ENCODE measurements at regions of chr3 and their contacts with region 1.

Region 1: GRCh38 chr3:189013224-189013888 is 158.4 kb upstream of the TPRG1 start:
- DNase-seq: no peak
- H3K4me3 ChIP-seq: no peak overlapping the region
- H3K27ac ChIP-seq: no peak overlapping the region
- H3K4me1 ChIP-seq: no peaks in the 10 kb centered on the region
- H3K27me3 ChIP-seq: no peaks in the 10 kb centered on the region
- CTCF ChIP-seq: no peak
- EP300 ChIP-seq: no peak
- POLR2A ChIP-seq: no peak
- RAD21 ChIP-seq: no peak

Region 2: GRCh38 chr3:188842639-188843038 is 170.7 kb before region 1 on chr3:
- CTCF ChIA-PET with region 1: no interaction called
- POLR2A ChIA-PET with region 1: no interaction called
- DNase-seq: no peak
- H3K4me3 ChIP-seq: no peak overlapping the region
- H3K27ac ChIP-seq: no peak overlapping the region
- H3K4me1 ChIP-seq: no peaks in the 10 kb centered on the region
- H3K27me3 ChIP-seq: no peaks in the 10 kb centered on the region
- CTCF ChIP-seq: no peak
- EP300 ChIP-seq: no peak
- POLR2A ChIP-seq: no peak
- RAD21 ChIP-seq: no peak

Region 3: GRCh38 chr3:189041482-189042090 is 28.2 kb after region 1 on chr3:
- CTCF ChIA-PET with region 1: interaction called, 11 read pairs
- POLR2A ChIA-PET with region 1: no interaction called
- DNase-seq: peak; percentile 33 to 69
- H3K4me3 ChIP-seq: no peak overlapping the region
- H3K27ac ChIP-seq: no peak overlapping the region
- H3K4me1 ChIP-seq: no peaks in the 10 kb centered on the region
- H3K27me3 ChIP-seq: no peaks in the 10 kb centered on the region
- CTCF ChIP-seq: peak; percentile 15 to 81 (median 62)
- EP300 ChIP-seq: no peak
- POLR2A ChIP-seq: no peak
- RAD21 ChIP-seq: peak; percentile 66 to 76

Region 4: DNA sequence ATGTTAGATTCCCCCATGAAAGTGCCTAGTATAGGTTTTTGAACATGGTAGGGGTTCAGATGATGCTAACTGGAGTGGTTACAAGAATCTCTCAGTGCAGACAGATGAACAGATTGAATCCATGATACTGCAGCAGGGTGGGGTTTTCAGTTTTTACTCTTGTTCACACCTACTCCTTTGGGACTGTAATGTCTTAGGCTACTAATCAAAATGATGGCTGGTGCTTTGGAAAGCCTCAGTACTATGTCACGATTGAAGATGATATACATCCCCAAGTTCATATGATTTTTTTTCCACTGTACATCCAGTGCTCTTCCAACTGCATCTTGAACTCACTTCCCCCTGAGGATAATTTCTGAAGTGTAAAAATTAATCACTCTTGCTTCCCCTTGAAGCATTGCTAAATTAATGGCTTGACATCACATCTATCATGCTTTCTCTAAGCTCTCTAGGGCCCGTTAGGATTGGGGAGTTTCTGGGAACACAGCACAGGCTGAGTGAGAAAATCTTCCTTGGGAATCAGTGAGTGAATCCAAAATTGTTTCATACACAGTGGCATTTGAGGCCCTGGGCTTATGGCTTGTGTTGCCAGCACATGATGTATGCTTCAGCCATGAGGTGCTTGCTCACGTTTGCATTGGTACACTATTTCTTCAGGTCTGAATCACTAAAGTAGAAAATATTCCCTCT is 43.4 kb after region 1 on chr3:
- CTCF ChIA-PET with region 1: no interaction called
- POLR2A ChIA-PET with region 1: no interaction called
- DNase-seq: no peak
- H3K4me3 ChIP-seq: no peak overlapping the region
- H3K27ac ChIP-seq: no peak overlapping the region
- H3K4me1 ChIP-seq: 0 out of 7 replicates have a peak, but pooled peaks cover 0 to 2% (median 0%) of the 10 kb centered on the region in 4 experiments
- H3K27me3 ChIP-seq: no peaks in the 10 kb centered on the region
- CTCF ChIP-seq: no peak
- EP300 ChIP-seq: no peak
- POLR2A ChIP-seq: no peak
- RAD21 ChIP-seq: no peak

Measured in H1 (cell line).